Ascending aorta (tissue), 2 donors: ENCODE measurements at regions of chr3 and their contacts with region 1.

Region 1: DNA sequence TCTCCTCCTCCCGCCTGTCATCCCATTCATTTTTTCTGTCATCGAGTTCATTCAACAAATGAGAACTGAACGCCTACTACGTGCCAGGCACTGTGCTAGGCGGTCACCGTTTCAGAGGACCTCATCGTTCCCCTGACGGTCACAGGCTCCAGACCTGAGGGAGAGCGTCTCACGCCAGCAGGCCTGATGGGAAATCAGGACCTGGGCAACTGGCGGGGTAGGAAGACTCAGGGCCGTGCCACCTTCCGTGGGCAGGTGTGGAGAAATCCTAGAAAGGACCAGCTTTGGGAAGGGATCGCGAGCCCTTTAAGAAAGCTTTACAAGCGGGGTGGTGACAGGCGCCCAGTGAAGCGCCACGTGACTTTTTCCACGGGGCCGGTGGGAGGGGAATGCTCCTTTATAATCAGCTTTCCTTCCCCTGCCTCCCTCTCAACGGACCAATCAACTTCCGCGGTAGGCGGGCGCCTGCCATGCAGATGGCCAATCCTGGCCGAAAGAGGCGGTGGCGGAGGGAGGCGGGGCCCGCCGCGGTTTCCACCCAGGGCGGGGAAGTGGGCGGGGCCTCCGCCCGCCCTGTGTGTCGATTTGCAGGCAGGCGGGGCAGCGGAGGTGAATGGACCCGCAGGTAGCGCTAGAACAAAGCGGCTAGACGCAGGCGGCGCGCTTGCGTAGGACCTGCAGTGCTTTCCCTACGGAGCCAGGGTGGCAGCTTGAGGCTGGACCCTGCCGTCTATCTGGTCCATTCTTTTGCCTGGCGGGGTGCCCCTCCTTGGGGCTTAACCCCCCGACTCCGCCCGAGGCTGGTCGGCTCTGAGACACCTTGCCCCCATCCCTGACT is 816 bp upstream of the DUSP7 start:
- DNase-seq: peak; percentile 99 to 100
- H3K4me3 ChIP-seq: peak overlapping the region; percentile 69 to 95
- H3K27ac ChIP-seq: peak overlapping the region; percentile 93 to 94
- H3K4me1 ChIP-seq: peaks cover 19 to 33% of the 10 kb centered on the region in 2 donors
- H3K27me3 ChIP-seq: no peaks in the 10 kb centered on the region
- CTCF ChIP-seq: peak in 1 of 3 experiments; percentile 19

Region 2: DNA sequence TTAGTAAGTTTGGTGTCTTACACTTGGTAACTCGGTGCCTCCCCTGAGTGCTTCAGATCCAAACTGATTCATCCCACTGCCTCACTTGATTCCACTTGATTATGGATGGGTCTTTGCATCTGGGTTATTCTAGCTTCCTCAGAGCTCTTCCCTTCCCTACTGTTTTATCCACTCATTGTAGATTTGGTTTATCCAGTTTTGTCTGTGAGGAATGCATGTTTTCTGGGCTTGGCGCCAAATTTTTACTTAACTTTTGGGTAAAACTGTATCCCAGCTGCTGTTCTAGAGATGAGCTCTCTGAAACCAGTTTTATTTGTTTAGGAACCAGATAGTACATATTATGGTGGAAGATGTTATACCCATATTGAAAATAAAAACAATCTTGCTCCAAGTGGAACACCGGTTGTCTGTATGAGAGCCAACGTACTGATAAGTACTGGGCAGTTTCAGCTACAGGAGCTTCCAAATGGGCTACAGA is 497.7 kb before region 1 on chr3:
- intact Hi-C with region 1: no loop called
- DNase-seq: no peak
- H3K4me3 ChIP-seq: no peak overlapping the region
- H3K27ac ChIP-seq: no peak overlapping the region
- H3K4me1 ChIP-seq: no peaks in the 10 kb centered on the region
- H3K27me3 ChIP-seq: no peaks in the 10 kb centered on the region
- CTCF ChIP-seq: no peak

Region 3: DNA sequence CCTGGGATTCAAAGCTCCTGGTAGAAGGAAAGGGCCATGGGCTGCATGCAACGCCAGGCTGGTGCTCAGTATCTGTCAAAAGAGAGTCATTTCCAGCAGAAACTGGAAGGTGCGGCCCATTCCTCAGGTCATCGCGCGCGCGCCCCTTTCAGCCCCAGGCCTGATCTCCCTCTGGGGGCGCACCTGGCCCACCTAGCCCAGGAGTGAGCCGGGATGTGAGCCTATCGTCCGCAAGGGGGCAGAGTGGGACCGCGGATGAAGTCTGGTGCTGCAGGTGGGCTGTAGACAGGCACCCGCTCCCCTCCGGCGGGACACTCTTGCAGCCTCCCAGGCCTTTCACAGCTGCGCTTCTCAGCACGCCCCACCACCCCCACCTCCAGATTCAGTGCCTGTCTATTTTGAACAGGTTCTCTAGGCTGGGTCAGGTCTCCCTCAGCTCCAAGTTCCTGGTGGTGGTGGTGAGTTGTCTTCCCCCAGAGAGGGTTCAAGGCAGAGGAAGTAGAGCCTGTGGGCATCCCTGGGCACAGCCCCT is 55.7 kb before region 1 on chr3:
- intact Hi-C with region 1: loop called (anchors 1 kb)
- DNase-seq: peak in 1 of 2 donors; percentile 87
- H3K4me3 ChIP-seq: no peak overlapping the region
- H3K27ac ChIP-seq: no peak overlapping the region
- H3K4me1 ChIP-seq: peaks cover 0 to 19% of the 10 kb centered on the region in 2 donors
- H3K27me3 ChIP-seq: no peaks in the 10 kb centered on the region
- CTCF ChIP-seq: peak; percentile 91 to 98 (median 97)

Region 4: GRCh38 chr3:52090131-52090932 is 33.1 kb after region 1 on chr3:
- intact Hi-C with region 1: loop called (anchors 1 kb)
- DNase-seq: peak in 1 of 2 donors; percentile 93
- H3K4me3 ChIP-seq: no peak overlapping the region
- H3K27ac ChIP-seq: peak overlapping the region; percentile 98 to 99
- H3K4me1 ChIP-seq: peaks cover 31 to 41% of the 10 kb centered on the region in 2 donors
- H3K27me3 ChIP-seq: no peaks in the 10 kb centered on the region
- CTCF ChIP-seq: no peak

Region 5: GRCh38 chr3:52144034-52144795 is 87.0 kb after region 1 on chr3:
- intact Hi-C with region 1: loop called (anchors 2 kb)
- DNase-seq: peak in 1 of 2 donors; percentile 92
- H3K4me3 ChIP-seq: no peak overlapping the region
- H3K27ac ChIP-seq: no peak overlapping the region
- H3K4me1 ChIP-seq: no peaks in the 10 kb centered on the region
- H3K27me3 ChIP-seq: no peaks in the 10 kb centered on the region
- CTCF ChIP-seq: peak; percentile 95 to 98 (median 96)

Region 6: DNA sequence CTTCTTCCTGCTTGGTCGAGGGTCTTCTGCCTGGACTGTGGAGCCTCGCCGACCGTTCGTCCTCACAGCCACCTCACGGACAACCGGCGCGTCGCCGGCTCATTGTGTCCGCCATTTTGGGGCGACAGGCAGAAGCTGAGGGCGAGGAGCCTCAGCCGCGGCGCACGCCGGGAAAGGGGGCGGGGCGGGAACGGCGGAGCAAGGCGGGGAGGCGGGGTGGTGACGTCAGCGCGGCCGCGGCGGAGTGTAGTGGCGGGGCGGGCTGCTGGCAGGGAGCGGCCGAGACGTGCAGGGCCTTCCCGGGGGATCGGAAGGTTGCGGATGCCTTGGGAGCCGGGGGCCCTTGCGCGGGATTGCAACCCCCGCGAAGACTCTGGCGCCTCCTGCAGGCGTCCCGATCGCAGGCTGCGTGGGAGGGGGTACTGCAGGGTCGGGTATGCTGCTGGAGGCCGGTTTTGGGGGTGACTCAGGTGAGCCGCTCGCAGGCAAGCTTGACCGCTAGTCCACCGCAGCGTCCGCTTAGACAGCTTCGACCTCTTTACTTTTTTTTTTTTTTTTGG is 221.4 kb after region 1 on chr3 and contains the start of gene WDR82:
- intact Hi-C with region 1: loop called (anchors 10 kb)
- DNase-seq: peak; percentile 82 to 97
- H3K4me3 ChIP-seq: peak within 1 kb of the TSS; percentile 81 to 91
- H3K27ac ChIP-seq: peak within 1 kb of the TSS; percentile 94 to 97
- H3K4me1 ChIP-seq: peaks cover 11 to 43% of the 10 kb centered on the region in 2 donors
- H3K27me3 ChIP-seq: no peaks in the 10 kb centered on the region
- CTCF ChIP-seq: peak; percentile 48 to 54 (median 49)
- total RNA-seq, gene WDR82: 42.0 TPM